ENCODE measurements at regions of chr20 and their contacts with region 1.

Region 1: GRCh38 chr20:13546497-13547131 is 92.1 kb downstream of the TASP1 start:
- DNase-seq: peak; percentile 72
- H3K4me3 ChIP-seq: no peak overlapping the region
- H3K27ac ChIP-seq: no peak overlapping the region
- H3K4me1 ChIP-seq: no peaks in the 10 kb centered on the region
- H3K27me3 ChIP-seq: no peaks in the 10 kb centered on the region
- CTCF ChIP-seq: peak; percentile 79
- POLR2A ChIP-seq: no peak

Region 2: DNA sequence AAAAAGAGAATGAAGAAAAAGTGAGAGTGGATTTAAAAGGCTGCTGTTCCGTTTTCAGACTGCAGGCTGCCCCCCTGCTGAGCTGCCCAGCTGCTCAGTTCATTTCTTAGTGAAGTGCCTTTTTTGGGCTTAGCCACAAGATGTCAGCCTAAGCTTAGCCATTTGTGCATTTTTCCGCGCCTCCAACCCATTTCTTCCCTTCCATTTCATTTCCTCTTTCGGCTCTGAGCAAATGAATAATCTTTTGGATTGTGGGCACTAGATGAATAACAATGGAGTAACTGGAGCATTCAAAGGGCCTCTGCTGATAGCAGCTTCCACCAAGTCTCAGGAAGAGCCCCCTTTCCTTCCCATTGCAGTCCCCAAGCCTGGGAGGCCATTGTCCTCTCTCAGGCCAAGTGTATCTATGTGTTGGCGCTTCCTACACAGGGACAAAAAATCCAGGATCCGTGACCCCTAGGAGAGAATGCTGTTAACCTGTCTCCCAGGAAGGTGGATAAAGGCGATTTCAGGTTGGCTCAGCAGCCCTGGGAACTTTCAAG is 621.3 kb before region 1 on chr20:
- CTCF ChIA-PET with region 1: interaction called, 29 read pairs
- POLR2A ChIA-PET with region 1: no interaction called
- dilution Hi-C with region 1: no loop called
- intact Hi-C with region 1: loop called (anchors 2 kb)
- DNase-seq: peak; percentile 81
- H3K4me3 ChIP-seq: no peak overlapping the region
- H3K27ac ChIP-seq: no peak overlapping the region
- H3K4me1 ChIP-seq: peaks cover 29% of the 10 kb centered on the region
- H3K27me3 ChIP-seq: peaks cover 2 to 3% of the 10 kb centered on the region in 2 experiments
- CTCF ChIP-seq: peak; percentile 90 to 96
- POLR2A ChIP-seq: no peak

Region 3: GRCh38 chr20:13302647-13303450 is 243.8 kb before region 1 on chr20:
- CTCF ChIA-PET with region 1: interaction called, 24 read pairs
- POLR2A ChIA-PET with region 1: no interaction called
- dilution Hi-C with region 1: no loop called
- intact Hi-C with region 1: no loop called
- DNase-seq: peak; percentile 21
- H3K4me3 ChIP-seq: no peak overlapping the region
- H3K27ac ChIP-seq: no peak overlapping the region
- H3K4me1 ChIP-seq: no peaks in the 10 kb centered on the region
- H3K27me3 ChIP-seq: peaks cover 3 to 4% of the 10 kb centered on the region in 2 experiments
- CTCF ChIP-seq: peak; percentile 75 to 81
- POLR2A ChIP-seq: no peak

Region 4: GRCh38 chr20:13412806-13413445 is 133.7 kb before region 1 on chr20:
- CTCF ChIA-PET with region 1: interaction called, 11 read pairs
- POLR2A ChIA-PET with region 1: no interaction called
- dilution Hi-C with region 1: no loop called
- intact Hi-C with region 1: no loop called
- DNase-seq: no peak
- H3K4me3 ChIP-seq: no peak overlapping the region
- H3K27ac ChIP-seq: no peak overlapping the region
- H3K4me1 ChIP-seq: no peaks in the 10 kb centered on the region
- H3K27me3 ChIP-seq: no peaks in the 10 kb centered on the region
- CTCF ChIP-seq: no peak
- POLR2A ChIP-seq: no peak

Region 5: GRCh38 chr20:13525225-13525940 is 21.2 kb before region 1 on chr20:
- CTCF ChIA-PET with region 1: interaction called, 27 read pairs
- POLR2A ChIA-PET with region 1: no interaction called
- dilution Hi-C with region 1: no loop called
- intact Hi-C with region 1: no loop called
- DNase-seq: peak; percentile 57
- H3K4me3 ChIP-seq: no peak overlapping the region
- H3K27ac ChIP-seq: peak overlapping the region; percentile 34
- H3K4me1 ChIP-seq: peaks cover 12% of the 10 kb centered on the region
- H3K27me3 ChIP-seq: no peaks in the 10 kb centered on the region
- CTCF ChIP-seq: no peak
- POLR2A ChIP-seq: no peak

Region 6: DNA sequence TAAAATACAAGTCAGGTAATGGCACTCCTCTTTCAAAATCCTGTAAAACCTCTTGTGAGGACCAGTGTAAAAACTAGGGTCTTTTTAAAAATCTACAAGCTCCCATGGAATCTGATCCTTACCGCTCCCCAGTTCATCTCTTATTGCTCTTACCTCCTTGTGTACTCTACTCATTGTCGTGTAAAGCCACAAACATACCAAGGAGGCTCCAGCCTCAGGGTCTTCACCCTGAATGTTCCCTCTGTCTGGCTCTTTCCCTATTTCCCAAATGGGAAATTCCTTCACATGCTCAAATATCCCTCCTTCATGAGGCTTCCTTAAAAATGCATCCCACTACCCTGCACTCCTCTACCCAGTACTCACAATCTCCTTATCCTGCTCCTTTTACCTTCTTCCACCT is 25.0 kb after region 1 on chr20:
- CTCF ChIA-PET with region 1: interaction called, 44 read pairs
- POLR2A ChIA-PET with region 1: no interaction called
- dilution Hi-C with region 1: no loop called
- intact Hi-C with region 1: no loop called
- DNase-seq: no peak
- H3K4me3 ChIP-seq: no peak overlapping the region
- H3K27ac ChIP-seq: no peak overlapping the region
- H3K4me1 ChIP-seq: no peaks in the 10 kb centered on the region
- H3K27me3 ChIP-seq: no peaks in the 10 kb centered on the region
- CTCF ChIP-seq: no peak
- POLR2A ChIP-seq: no peak

Region 7: DNA sequence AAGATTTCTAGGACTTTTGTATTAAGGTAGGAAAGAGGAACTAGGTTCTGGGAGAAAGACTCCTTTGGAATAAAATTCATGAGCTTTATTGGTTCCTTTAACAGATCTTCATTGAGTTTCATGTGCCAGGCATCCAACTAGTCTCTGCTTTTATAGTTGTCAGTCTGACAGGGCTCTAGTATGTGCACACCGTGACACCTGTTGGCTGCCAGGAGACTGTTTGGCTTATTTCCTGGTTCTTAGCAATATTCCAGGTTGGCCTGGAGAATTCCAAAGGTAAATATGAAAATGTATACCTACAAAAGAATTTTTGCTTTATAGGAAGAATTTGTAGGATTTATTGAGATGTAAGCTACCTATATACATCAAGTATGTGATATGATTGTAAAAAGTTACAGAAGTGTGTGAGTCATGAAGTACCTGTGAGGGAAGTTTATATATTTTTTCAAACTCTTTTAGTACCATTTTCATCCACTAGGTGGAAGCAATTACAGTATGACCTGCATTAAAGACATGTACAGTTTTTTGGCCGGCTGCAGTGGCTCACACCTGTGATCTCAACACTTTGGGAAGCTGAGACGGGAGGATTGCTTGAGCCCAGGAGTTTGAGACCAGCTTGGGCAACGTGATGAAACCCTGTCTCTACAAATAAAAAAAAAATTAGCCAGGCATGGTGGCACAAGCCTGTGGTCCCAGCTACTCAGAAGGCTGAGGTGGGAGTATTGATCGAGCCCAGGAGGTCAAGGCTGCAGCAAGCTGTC is 273.5 kb after region 1 on chr20:
- CTCF ChIA-PET with region 1: no interaction called
- POLR2A ChIA-PET with region 1: no interaction called
- dilution Hi-C with region 1: no loop called
- intact Hi-C with region 1: no loop called
- DNase-seq: peak; percentile 60
- H3K4me3 ChIP-seq: no peak overlapping the region
- H3K27ac ChIP-seq: no peak overlapping the region
- H3K4me1 ChIP-seq: peaks cover 8% of the 10 kb centered on the region
- H3K27me3 ChIP-seq: peaks cover 0 to 4% of the 10 kb centered on the region in 2 experiments
- CTCF ChIP-seq: peak; percentile 21 to 33
- POLR2A ChIP-seq: no peak

Region 8: DNA sequence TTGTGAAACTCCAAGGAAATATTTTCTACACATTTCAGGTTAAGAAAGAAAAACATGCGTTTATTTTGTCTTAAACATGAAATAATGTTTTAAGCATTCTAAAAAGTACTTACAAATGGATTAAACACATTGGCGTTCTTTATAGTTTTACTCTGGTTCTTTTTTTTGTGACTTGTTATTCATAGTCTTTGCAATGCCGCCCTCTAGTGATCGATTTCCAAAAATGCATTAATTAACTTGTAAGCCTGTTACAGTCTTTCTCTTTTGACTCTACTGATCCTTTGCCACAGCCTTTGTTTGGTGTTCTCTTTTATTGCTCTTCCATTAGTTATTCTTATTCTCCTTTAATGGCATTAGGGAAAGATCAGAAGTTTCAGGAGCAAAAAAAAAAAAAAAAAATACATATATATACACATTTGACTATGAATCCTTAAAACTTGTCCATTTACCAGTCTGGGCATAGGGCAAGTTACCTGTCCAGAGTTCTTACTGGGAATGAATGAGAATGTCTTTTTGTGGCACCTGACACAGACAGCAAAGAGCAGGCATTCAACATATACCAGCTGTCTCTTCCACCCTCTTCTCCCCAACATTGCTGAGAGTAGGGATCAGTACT is 508.6 kb after region 1 on chr20:
- CTCF ChIA-PET with region 1: no interaction called
- POLR2A ChIA-PET with region 1: no interaction called
- dilution Hi-C with region 1: no loop called
- intact Hi-C with region 1: loop called (anchors 10 kb)
- DNase-seq: peak; percentile 68
- H3K4me3 ChIP-seq: no peak overlapping the region
- H3K27ac ChIP-seq: no peak overlapping the region
- H3K4me1 ChIP-seq: no peaks in the 10 kb centered on the region
- H3K27me3 ChIP-seq: no peaks in the 10 kb centered on the region
- CTCF ChIP-seq: peak; percentile 37 to 42
- POLR2A ChIP-seq: no peak